HEK293 (cell line): ENCODE measurements at regions of chr6 and their contacts with region 1.

Region 1: DNA sequence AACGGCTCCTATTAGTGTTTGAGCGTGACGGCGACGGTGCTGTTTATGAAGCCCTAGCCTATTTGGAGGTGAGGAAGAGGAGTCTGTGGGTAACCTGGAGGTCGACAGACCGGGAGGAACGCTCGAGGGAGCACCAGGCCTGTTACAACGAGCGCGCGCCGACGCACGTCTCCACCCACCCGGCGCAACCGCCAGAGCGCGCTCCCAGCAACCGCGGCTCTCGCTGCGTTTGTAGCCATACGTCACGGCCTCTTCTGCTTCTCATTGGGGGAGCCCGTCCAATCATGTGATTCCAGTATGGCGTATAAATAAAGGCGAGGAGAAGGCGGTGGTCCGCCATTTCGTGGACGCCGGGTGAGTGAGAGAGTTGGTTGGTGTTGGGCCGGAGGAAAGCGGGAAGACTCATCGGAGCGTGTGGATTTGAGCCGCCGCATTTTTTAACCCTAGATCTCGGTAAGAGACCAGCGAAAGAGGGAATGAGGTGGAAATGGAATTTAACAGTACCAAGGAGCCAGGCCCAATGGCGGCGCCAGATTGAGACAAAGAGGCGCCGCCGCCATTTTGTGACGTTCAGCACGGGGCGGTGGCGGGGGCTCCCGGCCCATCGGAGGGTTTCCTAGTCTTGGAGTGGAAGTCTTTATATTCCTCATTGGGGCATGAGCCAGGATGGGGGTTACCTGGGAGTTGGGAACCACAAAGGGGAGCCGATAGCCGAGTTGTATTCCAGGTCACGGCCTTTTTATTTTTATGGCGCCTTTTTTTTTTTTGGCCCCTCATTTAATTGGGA is at the start of gene SRSF3:
- H3K4me3 ChIP-seq: peak within 1 kb of the TSS; percentile 90
- H3K27ac ChIP-seq: peak within 1 kb of the TSS; percentile 89
- H3K4me1 ChIP-seq: peaks cover 10% of the 10 kb centered on the region; the same call in 1 of the 2 replicates
- CTCF ChIP-seq: peak; percentile 95

Region 2: GRCh38 chr6:36605560-36606391 is 11.6 kb after region 1 on chr6:
- CTCF ChIA-PET with region 1: interaction called, 6 read pairs
- POLR2A ChIA-PET with region 1: interaction called, 25 read pairs
- H3K4me3 ChIP-seq: no peak overlapping the region
- H3K27ac ChIP-seq: no peak overlapping the region
- H3K4me1 ChIP-seq: no peaks in the 10 kb centered on the region
- CTCF ChIP-seq: no peak